Calu3 (cell line): ENCODE measurements at regions of chr9 and their contacts with region 1.

Region 1: GRCh38 chr9:73183917-73184861 is 32.5 kb downstream of the ANXA1 start:
- DNase-seq: no peak
- H3K4me3 Mint-ChIP-seq: no peak overlapping the region
- H3K27ac Mint-ChIP-seq: no peak overlapping the region
- H3K4me1 Mint-ChIP-seq: peaks cover 8% of the 10 kb centered on the region
- H3K27me3 Mint-ChIP-seq: no peaks in the 10 kb centered on the region
- CTCF ChIP-seq: no peak

Region 2: GRCh38 chr9:72856972-72857623 is 327.1 kb before region 1 on chr9:
- CTCF ChIA-PET with region 1: no interaction called
- intact Hi-C with region 1: loop called (anchors 1 kb)
- DNase-seq: peak; percentile 45
- H3K4me3 Mint-ChIP-seq: no peak overlapping the region
- H3K27ac Mint-ChIP-seq: no peak overlapping the region
- H3K4me1 Mint-ChIP-seq: peaks cover 23% of the 10 kb centered on the region
- H3K27me3 Mint-ChIP-seq: no peaks in the 10 kb centered on the region
- CTCF ChIP-seq: no peak

Region 3: GRCh38 chr9:73007966-73008672 is 176.1 kb before region 1 on chr9:
- CTCF ChIA-PET with region 1: no interaction called
- intact Hi-C with region 1: no loop called
- DNase-seq: no peak
- H3K4me3 Mint-ChIP-seq: no peak overlapping the region
- H3K27ac Mint-ChIP-seq: no peak overlapping the region
- H3K4me1 Mint-ChIP-seq: no peaks in the 10 kb centered on the region
- H3K27me3 Mint-ChIP-seq: no peaks in the 10 kb centered on the region
- CTCF ChIP-seq: no peak

Region 4: GRCh38 chr9:73038613-73039012 is 145.6 kb before region 1 on chr9:
- CTCF ChIA-PET with region 1: interaction called, 3 read pairs
- intact Hi-C with region 1: loop called (anchors 5 kb)
- DNase-seq: peak; percentile 2
- H3K4me3 Mint-ChIP-seq: peak overlapping the region; percentile 41
- H3K27ac Mint-ChIP-seq: peak overlapping the region; percentile 70
- H3K4me1 Mint-ChIP-seq: peaks cover 14% of the 10 kb centered on the region
- H3K27me3 Mint-ChIP-seq: no peaks in the 10 kb centered on the region
- CTCF ChIP-seq: no peak

Region 5: DNA sequence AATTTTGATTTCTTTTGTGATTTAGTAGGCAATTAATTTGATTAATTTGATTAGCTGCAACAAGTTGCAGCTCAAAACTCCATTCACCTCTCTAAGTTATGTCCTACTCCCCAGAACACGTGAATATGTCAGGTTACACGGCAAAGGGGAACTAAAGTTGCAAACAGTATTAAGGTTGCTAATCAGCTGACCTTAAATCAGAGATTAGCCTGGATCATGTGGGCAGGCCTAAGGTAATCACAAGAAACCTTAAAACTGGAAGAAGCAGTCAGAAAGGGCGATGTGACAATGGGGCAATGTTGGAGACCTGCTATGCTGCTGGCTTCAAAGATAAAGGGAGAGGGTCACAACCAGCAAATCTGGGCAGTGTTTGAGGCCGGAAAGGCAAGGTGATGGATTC is 79.8 kb before region 1 on chr9:
- CTCF ChIA-PET with region 1: interaction called, 6 read pairs
- intact Hi-C with region 1: loop called (anchors 1 kb)
- DNase-seq: no peak
- H3K4me3 Mint-ChIP-seq: no peak overlapping the region
- H3K27ac Mint-ChIP-seq: no peak overlapping the region
- H3K4me1 Mint-ChIP-seq: peaks cover 19% of the 10 kb centered on the region
- H3K27me3 Mint-ChIP-seq: no peaks in the 10 kb centered on the region
- CTCF ChIP-seq: no peak

Region 6: DNA sequence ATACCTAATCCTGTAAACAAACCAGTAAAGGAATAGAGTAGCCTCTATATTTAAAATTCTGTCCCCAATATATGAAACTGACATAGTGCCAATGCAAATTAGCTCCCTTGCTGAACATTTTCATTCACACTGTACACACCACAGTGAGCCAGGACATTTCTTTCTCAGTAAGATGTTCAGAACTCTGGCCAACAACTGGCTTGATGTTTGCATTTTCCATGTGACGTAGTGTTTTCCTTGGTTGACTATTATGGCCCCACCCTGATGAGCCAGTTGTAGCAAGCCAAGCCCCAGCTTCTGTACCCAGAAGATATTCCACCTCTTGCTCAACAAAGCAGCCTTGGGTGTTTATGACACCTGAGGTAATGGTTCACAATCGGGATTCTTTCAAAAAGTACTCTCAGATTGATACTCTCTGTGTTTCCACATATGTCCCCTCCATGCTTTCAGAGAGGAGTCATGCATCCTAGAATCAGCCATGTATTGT is 50.2 kb before region 1 on chr9:
- CTCF ChIA-PET with region 1: interaction called, 4 read pairs
- intact Hi-C with region 1: loop called (anchors 5 kb)
- DNase-seq: peak; percentile 50
- H3K4me3 Mint-ChIP-seq: no peak overlapping the region
- H3K27ac Mint-ChIP-seq: peak overlapping the region; percentile 81
- H3K4me1 Mint-ChIP-seq: peaks cover 56% of the 10 kb centered on the region
- H3K27me3 Mint-ChIP-seq: no peaks in the 10 kb centered on the region
- CTCF ChIP-seq: no peak